ENCODE measurements at regions of chr1 and their contacts with region 1.

Region 1: DNA sequence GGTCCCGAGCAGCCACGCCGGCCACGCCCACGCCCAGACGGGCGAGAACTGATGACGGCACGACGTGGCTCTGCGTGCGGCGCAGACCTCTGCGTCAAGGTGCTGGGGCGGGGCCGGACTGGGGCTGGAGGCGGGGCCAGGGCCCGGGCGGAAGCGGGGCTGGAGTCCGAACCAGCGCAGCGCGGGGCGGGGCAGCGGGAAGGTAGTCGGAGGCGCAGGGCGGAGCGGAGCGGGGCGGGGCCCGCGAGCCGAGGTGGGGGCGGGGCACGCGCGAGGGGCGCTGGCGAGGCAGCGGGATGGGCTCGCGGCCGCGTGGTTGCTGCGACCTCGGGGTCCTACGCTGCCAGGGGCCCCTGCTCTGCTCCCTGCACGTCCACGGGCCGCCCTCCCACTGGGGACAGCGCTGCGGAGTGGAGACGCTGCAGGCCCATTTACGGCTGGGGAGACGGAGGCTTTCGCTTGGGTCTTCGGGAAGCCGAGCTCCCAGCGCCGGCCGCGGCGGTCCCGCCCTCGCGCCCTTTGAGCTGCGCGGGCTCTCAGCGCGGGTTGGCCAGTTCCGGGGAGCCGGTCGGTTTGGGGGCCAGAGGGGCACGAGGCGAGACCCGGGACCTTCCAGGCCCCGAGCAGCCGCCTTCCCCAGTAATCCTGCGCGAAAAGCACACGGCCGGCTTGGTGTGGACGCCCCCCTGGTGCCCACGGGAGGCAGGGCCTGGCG is at the start of gene PEX10:
- DNase-seq: peak; percentile 100
- H3K4me3 Mint-ChIP-seq: peak within 1 kb of the TSS; percentile 94
- H3K27ac Mint-ChIP-seq: peak within 1 kb of the TSS; percentile 95
- H3K4me1 Mint-ChIP-seq: peaks cover 27% of the 10 kb centered on the region
- H3K27me3 Mint-ChIP-seq: no peaks in the 10 kb centered on the region
- total RNA-seq, gene PEX10: 22.3 and 24.2 TPM in 2 replicates

Region 2: DNA sequence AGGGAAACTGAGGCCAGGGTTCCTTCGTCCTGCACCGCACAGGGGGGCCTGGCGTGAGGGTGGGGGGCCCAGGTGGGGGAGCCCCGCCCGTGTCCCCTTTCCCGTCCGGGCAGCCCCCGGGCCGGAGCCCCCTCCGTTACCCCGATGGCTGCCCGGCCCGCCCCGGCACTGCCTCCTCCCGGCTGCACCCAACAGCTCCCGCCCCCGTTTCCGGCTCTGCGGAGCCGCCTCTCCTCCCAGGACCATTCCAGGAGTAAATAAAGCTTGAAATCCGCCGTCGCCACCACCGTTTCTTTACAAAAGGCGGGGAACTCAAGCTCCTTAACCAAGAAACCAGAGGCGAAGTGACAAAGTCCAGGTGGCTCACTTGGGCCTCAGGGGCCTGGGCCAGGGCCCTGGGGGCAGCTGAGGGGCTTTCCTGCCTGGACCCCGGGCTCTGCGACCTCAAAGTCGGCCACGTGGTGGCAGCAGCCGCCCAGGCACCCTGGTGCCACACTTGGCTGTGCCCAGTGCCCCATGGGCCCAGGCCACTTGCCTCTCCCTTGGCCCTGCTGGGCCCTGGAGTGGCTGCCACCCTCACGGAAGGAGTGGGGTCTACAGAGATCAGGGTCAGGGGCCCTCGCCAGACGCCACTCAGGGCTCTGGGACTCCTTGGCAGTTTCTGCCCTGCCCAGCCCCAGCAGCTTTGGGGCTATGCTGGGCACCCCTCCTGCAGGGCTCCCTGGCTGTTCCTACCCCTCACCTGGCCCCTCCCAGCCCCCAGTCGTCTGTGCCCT is 217.6 kb before region 1 on chr1:
- intact Hi-C with region 1: loop called (anchors 1 kb)
- DNase-seq: peak; percentile 97
- H3K4me3 Mint-ChIP-seq: peak overlapping the region; percentile 90
- H3K27ac Mint-ChIP-seq: peak overlapping the region; percentile 93
- H3K4me1 Mint-ChIP-seq: peaks cover 17% of the 10 kb centered on the region
- H3K27me3 Mint-ChIP-seq: no peaks in the 10 kb centered on the region

Region 3: GRCh38 chr1:2525920-2526823 is 113.5 kb after region 1 on chr1 and contains the start of gene PANK4:
- intact Hi-C with region 1: loop called (anchors 1 kb)
- DNase-seq: peak; percentile 97
- H3K4me3 Mint-ChIP-seq: peak within 1 kb of the TSS; percentile 85
- H3K27ac Mint-ChIP-seq: peak within 1 kb of the TSS; percentile 96
- H3K4me1 Mint-ChIP-seq: peaks cover 38% of the 10 kb centered on the region
- H3K27me3 Mint-ChIP-seq: peaks cover 15% of the 10 kb centered on the region
- total RNA-seq, gene PANK4: 55.2 and 56.7 TPM in 2 replicates

Region 4: DNA sequence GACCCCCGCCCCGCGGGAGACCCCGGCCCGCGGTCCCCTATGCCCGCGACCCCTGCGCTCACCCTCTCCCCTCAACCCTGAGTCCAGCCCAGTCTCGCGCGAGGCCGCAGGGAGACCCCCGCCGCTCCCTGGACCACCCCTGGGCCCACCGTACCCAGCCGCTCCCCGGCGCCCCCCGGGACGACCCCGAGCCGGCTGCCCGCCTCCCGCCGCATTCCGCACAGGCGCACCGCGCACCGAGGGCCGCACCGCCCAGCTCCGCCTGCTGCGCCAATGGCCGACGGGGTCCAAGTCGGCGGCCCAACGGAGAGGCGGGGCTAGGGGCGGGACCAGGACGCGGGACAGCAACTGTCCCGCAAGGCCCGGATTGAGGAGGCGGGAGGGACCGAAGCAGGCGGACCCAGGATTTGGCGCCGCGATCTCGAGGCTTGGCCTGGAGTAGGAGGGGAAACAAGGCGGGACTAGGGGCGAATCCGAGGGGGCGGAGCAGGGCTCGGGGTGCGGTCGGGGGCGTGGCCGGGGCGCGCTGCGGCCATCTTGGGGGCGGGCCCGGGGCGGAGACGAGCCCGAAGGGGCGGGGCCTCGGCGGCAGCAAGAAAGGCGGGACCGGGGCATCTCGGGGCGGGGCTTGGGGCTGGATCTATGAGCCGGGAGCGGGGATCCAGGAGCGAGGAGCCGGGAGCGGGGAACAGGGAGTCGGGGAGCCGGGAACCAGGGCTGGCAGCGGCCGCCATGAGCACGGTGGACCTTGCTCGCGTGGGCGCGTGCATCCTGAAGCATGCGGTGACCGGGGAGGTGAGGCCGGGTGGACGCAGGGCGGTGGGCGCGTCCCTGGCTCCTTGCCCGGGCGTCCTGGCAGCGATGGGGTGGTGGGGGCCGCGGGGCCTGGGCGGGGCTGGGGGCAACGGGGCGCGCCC is 173.7 kb after region 1 on chr1 and contains the start of gene PRXL2B:
- intact Hi-C with region 1: loop called (anchors 5 kb)
- DNase-seq: peak; percentile 100
- H3K4me3 Mint-ChIP-seq: peak within 1 kb of the TSS; percentile 93
- H3K27ac Mint-ChIP-seq: peak within 1 kb of the TSS; percentile 95
- H3K4me1 Mint-ChIP-seq: peaks cover 36% of the 10 kb centered on the region
- H3K27me3 Mint-ChIP-seq: no peaks in the 10 kb centered on the region
- total RNA-seq, gene PRXL2B: 42.3 and 43.5 TPM in 2 replicates

Region 5: DNA sequence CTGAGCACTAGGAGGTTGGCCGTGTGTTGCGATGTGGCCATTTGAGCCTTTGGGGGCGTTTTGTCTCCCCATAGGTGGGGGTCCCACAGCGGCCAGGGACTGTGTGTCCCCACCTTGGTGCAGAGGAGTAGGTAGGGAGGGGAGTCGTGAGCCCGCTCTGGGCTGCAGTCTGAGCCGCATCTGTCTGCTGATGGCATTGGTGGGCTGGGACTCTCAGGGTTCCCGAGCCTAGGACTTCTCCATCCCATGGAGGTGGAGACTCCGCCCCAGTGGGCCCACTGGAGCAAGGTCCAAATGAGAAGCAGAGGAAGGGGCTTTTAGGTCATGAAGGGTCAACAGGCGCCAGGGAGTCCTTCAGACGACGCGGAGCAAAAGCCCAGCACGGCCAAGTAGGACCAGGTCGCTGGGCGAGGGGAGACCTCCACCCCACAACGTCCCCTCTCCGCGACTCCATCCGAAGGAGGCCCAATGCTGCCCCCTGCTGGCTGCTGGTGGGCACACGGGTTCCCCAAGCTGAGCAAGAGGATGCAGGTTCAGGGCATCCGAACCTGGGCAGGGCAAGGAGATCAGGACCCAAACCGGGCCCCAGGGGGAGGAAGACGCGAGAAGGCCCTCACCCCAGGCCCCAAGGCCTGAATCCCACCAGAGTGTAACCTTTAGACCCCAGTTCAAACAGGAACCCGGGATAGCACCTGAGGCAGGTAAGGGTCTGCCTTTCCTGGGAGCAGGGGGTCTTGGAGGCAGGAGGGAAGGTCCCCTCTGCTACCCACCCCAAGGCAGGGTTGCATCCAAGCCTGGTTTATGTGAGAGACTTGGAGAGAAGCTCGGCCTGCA is 373.9 kb after region 1 on chr1:
- intact Hi-C with region 1: loop called (anchors 1 kb)
- DNase-seq: peak; percentile 92
- H3K4me3 Mint-ChIP-seq: no peak overlapping the region
- H3K27ac Mint-ChIP-seq: no peak overlapping the region
- H3K4me1 Mint-ChIP-seq: peaks cover 5% of the 10 kb centered on the region
- H3K27me3 Mint-ChIP-seq: peaks cover 23% of the 10 kb centered on the region